Pancreas (tissue), 10 donors: ENCODE measurements at regions of chr10 and their contacts with region 1.

Region 1: DNA sequence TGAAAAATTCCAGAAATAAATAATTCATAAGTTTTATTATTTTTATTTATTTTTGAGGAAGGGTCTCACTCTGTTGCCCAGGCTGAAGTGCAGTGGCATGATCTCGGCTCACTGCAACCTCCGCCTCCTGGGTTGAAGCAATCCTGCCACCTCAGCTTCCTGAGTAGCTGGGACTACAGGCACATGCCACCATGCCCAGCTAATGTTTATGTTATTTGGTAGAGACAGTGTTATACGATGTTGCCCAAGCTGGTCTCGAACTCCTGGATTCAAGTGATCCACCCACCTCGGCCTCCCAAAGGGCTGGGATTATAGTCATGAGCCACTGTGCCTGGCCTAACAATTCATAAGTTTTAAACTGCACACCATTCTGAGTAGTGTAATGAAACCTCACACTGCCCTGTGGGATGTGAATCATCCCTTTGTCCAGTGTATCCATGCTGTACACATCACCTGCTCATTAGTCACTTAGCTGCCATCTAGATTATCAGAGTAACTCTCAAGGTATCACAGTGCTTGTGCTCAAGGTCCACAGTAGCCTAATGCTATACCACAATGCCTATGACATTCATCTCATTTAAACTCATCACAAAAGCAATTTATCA is 17.9 kb downstream of the RTKN2 start:
- DNase-seq: no peak
- ATAC-seq: no peak
- H3K4me3 ChIP-seq: no peak overlapping the region
- H3K27ac ChIP-seq: no peak overlapping the region
- H3K4me1 ChIP-seq: no peaks in the 10 kb centered on the region
- H3K27me3 ChIP-seq: no peaks in the 10 kb centered on the region
- CTCF ChIP-seq: no peak

Region 2: GRCh38 chr10:61896854-61897661 is 353.6 kb before region 1 on chr10:
- intact Hi-C with region 1: loop called in 1 of 3 experiments (anchors 10 kb)
- DNase-seq: peak; percentile 57 to 81 (median 76)
- ATAC-seq: peak; percentile 85 to 88 (median 86)
- H3K4me3 ChIP-seq: peak overlapping the region; percentile 19 to 55 (median 37)
- H3K27ac ChIP-seq: peak overlapping the region; percentile 28 to 76 (median 50)
- H3K4me1 ChIP-seq: peaks cover 7 to 15% (median 11%) of the 10 kb centered on the region in 3 donors
- H3K27me3 ChIP-seq: no peaks in the 10 kb centered on the region
- CTCF ChIP-seq: peak; percentile 60 to 69 (median 62)

Region 3: GRCh38 chr10:62038609-62039190 is 212.0 kb before region 1 on chr10:
- intact Hi-C with region 1: loop called in 1 of 3 experiments (anchors 5 kb)
- DNase-seq: peak in 5 of 6 donors; percentile 36 to 75 (median 57)
- ATAC-seq: peak; percentile 66 to 89 (median 87)
- H3K4me3 ChIP-seq: no peak overlapping the region
- H3K27ac ChIP-seq: peak overlapping the region in 1 of 4 donors; percentile 14
- H3K4me1 ChIP-seq: peaks cover 8 to 19% (median 18%) of the 10 kb centered on the region in 3 donors
- H3K27me3 ChIP-seq: no peaks in the 10 kb centered on the region
- CTCF ChIP-seq: peak; percentile 40 to 69 (median 61)

Region 4: DNA sequence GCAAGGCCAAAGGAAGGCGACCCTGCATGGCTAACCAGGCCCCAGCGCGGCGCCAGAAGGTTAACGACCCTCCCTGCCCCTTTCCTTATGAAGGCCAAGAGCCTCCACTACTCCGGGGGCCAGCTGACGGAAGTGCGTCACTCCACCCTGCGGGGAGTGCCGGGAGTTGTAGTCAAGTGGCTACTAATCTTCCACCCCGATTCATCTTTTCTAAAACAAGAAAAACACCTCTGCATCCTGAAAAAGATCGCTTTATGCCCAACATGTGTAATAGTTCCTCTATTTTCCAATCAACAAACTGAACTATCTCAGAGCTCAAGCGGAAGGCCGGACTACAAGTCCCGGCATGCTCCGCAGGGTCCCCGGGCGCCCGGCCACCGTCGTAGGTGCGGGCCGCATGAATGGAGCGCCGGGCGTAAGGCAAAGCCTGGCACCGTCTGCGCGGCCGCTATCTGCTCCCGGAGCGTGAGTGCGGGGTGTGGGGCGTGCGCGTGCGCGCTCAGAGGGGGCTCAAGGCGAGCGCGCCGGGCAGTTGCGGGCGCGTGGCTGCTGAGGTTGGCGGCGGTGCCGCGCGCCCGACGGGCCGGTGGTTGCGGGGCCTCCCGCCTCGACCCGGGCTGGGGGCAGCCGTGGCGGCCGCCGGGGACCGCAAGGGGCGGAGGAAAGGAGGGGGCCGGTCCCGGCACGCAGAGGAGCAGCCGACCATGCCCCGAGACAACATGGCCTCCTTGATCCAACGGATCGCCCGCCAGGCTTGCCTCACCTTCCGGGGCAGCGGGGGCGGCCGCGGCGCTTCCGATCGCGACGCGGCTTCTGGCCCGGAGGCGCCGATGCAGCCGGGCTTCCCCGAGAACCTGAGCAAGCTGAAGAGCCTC is 553.9 kb after region 1 on chr10 and contains the start of gene ADO:
- intact Hi-C with region 1: no loop called
- DNase-seq: peak; percentile 79 to 93 (median 82)
- ATAC-seq: peak; percentile 92 to 95 (median 94)
- H3K4me3 ChIP-seq: peak within 1 kb of the TSS; percentile 74 to 95 (median 92)
- H3K27ac ChIP-seq: peak within 1 kb of the TSS; percentile 77 to 97 (median 92)
- H3K4me1 ChIP-seq: peaks cover 11 to 28% (median 17%) of the 10 kb centered on the region in 3 donors
- H3K27me3 ChIP-seq: no peaks in the 10 kb centered on the region
- CTCF ChIP-seq: no peak
- total RNA-seq, gene ADO: 3.7 to 9.6 (median 5.7) TPM